Activated CD4-positive, alpha-beta memory T cell treated with anti-CD3 and anti-CD28 coated beads for 36 hours (primary cell): ENCODE measurements at regions of chr11 and their contacts with region 1.

Region 1: DNA sequence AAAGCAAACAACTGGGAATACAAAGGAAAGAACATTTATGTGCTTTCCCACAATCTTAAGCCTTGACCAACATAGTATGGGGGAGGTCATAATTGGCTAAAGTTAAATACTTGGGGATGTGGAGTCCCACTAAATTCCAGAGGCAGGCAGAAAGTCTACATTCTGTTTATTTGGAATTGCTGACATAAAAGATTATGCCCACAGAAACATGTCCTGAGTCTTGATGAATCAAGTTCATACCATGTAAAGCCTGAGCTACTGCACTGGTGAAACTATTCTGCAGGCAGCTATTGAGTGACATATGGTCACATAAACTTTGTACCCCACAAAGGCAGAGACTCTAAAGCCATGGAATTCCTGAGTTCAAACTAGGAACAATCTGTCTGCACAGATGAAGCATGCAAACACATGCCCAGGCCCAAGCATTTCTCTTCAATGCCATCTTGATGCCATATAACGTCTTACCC is 69.9 kb upstream of the CHRM4 start:
- DNase-seq: no peak
- H3K4me3 Mint-ChIP-seq: no peak overlapping the region
- H3K27ac Mint-ChIP-seq: no peak overlapping the region
- H3K4me1 Mint-ChIP-seq: peaks cover 16% of the 10 kb centered on the region
- H3K27me3 Mint-ChIP-seq: no peaks in the 10 kb centered on the region

Region 2: GRCh38 chr11:46410021-46410420 is 51.5 kb before region 1 on chr11:
- CTCF ChIA-PET with region 1: no interaction called
- POLR2A ChIA-PET with region 1: no interaction called
- intact Hi-C with region 1: loop called (anchors 10 kb)
- DNase-seq: no peak
- H3K4me3 Mint-ChIP-seq: no peak overlapping the region
- H3K27ac Mint-ChIP-seq: no peak overlapping the region
- H3K4me1 Mint-ChIP-seq: no peaks in the 10 kb centered on the region
- H3K27me3 Mint-ChIP-seq: no peaks in the 10 kb centered on the region

Region 3: GRCh38 chr11:46438211-46438610 is 23.3 kb before region 1 on chr11:
- CTCF ChIA-PET with region 1: no interaction called
- POLR2A ChIA-PET with region 1: no interaction called
- intact Hi-C with region 1: no loop called
- DNase-seq: no peak
- H3K4me3 Mint-ChIP-seq: no peak overlapping the region
- H3K27ac Mint-ChIP-seq: no peak overlapping the region
- H3K4me1 Mint-ChIP-seq: no peaks in the 10 kb centered on the region
- H3K27me3 Mint-ChIP-seq: no peaks in the 10 kb centered on the region